Ascending aorta (tissue), 2 donors: ENCODE measurements at regions of chr20 and their contacts with region 1.

Region 1: GRCh38 chr20:54097236-54097529 is 26.8 kb upstream of the BCAS1 start:
- DNase-seq: no peak
- H3K4me3 ChIP-seq: no peak overlapping the region
- H3K27ac ChIP-seq: no peak overlapping the region
- H3K4me1 ChIP-seq: no peaks in the 10 kb centered on the region
- H3K27me3 ChIP-seq: no peaks in the 10 kb centered on the region
- CTCF ChIP-seq: no peak

Region 2: GRCh38 chr20:54199721-54200176 is 102.6 kb after region 1 on chr20:
- intact Hi-C with region 1: loop called (anchors 5 kb)
- DNase-seq: peak in 1 of 2 donors; percentile 82
- H3K4me3 ChIP-seq: no peak overlapping the region
- H3K27ac ChIP-seq: no peak overlapping the region
- H3K4me1 ChIP-seq: no peaks in the 10 kb centered on the region
- H3K27me3 ChIP-seq: no peaks in the 10 kb centered on the region
- CTCF ChIP-seq: peak; percentile 58 to 91 (median 88)

Region 3: DNA sequence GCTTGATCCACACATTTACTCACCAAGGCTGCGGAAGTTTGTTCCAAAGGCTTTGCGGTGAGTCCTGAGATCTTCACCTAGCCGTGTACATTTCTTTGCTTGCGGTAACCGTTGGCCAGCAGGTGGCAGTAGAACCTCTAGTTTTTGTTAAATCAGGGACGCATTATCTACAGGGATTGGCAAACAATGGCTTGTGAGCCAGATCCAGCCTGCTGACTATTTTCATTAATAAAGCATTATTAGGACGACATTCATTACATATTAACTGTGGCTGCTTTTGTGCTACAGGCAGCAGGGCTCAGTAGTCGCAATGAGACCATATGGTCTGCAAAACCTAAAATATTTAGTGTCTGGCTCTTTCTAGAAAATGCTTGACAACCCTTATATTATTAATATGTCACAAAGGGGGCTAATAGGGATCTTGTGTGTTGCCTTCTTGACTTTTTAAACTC is 552.4 kb after region 1 on chr20:
- intact Hi-C with region 1: loop called (anchors 5 kb)
- DNase-seq: peak in 1 of 2 donors; percentile 79
- H3K4me3 ChIP-seq: no peak overlapping the region
- H3K27ac ChIP-seq: no peak overlapping the region
- H3K4me1 ChIP-seq: no peaks in the 10 kb centered on the region
- H3K27me3 ChIP-seq: no peaks in the 10 kb centered on the region
- CTCF ChIP-seq: peak; percentile 37 to 70 (median 63)